Mammary epithelial cell (primary cell): ENCODE measurements at regions of chr7 and their contacts with region 1.

Region 1: DNA sequence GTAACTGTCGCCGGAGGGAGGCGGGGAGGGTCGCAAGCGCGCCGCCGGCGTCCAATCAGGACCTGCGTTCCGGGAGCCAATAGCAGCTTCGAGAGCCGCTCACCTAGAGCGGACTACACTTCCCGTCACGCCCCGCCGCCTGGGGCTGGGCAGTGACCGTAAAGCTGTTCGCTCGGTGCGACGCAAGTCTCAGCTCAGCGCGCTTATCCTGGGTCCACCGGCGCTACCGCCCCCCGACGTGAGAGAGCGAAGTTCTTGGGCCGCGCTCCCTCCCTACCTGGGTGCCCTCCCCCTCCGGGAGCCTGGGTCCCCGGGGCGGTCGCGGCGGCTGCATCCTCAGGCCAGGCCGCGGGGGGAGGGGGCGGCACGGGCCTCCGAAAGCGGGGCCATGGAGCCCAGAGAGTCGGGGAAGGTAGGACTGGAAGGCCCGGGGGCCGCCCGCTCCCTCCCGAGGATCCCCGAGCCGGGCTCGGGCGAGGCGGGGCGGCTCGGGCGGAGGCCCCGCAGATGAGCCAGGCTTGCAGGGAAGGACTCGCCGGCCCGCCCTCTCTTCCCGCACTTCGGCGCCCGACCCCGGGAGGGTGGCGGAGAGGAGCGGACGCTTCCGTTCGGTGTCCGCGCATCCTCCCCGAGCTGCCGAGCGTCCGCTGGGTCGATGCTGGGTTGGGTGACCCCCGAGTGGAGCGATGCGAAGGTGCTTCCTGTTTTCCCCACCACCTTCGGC is at the start of gene ZNF862:
- DNase-seq: peak; percentile 96
- H3K4me3 ChIP-seq: peak within 1 kb of the TSS; percentile 47 to 90 (median 81)
- H3K27ac ChIP-seq: peak within 1 kb of the TSS; percentile 25
- H3K4me1 ChIP-seq: peaks cover 10% of the 10 kb centered on the region
- H3K27me3 ChIP-seq: no peaks in the 10 kb centered on the region
- CTCF ChIP-seq: no peak
- total RNA-seq, gene ZNF862: 9.7 to 10.5 TPM

Region 2: DNA sequence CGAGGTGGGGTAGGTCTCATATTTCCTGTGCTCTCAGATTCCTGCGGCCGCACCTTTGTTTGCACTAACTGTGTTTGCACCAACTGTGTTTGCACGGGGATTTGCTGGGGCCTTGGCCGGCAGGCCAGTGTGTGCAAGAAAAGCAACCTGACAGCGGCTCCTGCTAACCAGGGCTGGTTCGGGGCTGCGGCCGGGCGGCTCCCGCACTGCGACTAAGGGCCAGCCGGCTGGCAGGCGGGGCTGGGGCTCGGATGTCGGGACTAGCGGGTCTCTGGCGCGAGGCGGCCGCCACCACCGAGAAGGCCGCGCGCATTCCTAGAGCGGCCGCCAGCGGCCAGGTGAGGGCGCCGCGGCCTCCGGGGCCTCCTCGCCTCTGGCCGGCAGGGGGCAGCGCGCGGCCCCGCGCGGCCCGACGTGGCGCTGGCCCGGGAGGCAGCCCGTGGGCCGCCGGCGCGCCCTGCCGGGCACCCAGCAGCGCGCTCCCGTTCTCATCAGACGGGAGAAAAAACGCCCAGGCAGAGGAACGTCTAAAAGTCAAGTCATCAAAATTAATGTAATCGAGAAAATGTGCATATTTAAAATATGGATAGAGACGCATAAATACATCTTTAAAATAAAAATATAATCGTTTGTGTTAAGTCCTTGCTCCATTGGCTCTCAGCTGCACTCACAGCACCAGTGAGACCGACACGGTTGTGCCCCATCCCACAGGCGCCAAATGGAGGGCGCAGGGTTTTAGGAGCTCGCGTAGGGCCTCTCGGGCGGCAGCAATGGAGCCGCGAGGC is 416.1 kb before region 1 on chr7:
- CTCF ChIA-PET with region 1: no interaction called
- dilution Hi-C with region 1: no loop called
- in situ Hi-C with region 1: no loop called
- intact Hi-C with region 1: no loop called
- DNase-seq: peak; percentile 64
- H3K4me3 ChIP-seq: peak overlapping the region; percentile 47 to 56 (median 50)
- H3K27ac ChIP-seq: no peak overlapping the region
- H3K4me1 ChIP-seq: peaks cover 4% of the 10 kb centered on the region
- H3K27me3 ChIP-seq: no peaks in the 10 kb centered on the region
- CTCF ChIP-seq: peak; percentile 49 to 66

Region 3: DNA sequence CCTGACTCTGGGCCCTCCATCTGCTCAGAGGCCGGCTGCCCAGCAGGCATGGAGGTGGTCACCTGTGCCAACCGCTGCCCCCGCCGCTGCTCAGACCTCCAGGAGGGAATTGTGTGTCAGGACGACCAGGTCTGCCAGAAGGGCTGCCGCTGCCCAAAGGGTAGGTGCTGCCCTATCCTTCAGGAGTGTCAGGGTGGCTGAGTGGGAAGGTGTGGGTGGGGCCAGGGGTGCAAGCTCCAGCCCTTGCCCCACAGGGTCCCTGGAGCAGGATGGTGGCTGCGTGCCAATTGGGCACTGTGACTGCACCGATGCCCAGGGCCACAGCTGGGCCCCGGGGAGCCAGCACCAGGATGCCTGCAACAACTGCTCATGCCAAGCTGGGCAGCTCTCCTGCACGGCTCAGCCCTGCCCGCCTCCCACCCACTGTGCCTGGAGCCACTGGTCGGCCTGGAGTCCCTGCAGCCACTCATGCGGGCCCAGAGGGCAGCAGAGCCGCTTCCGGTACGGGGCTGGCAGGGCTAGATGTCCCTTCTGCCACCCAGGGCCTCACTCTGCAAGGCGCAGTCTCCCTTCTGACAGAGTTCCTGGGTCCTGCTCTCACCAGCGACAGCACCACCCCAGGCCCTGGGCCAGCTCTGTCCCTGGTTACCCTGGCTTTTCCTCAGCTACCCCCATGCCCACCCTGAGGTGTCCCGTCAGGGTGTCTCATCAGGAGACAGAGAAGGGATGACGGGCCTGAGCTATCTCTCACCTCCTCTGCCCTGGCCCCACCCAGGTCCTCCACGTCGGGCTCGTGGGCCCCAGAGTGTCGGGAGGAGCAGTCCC is 17.6 kb before region 1 on chr7:
- CTCF ChIA-PET with region 1: interaction called, 10 read pairs
- dilution Hi-C with region 1: no loop called
- in situ Hi-C with region 1: no loop called
- intact Hi-C with region 1: no loop called
- DNase-seq: no peak
- H3K4me3 ChIP-seq: no peak overlapping the region
- H3K27ac ChIP-seq: no peak overlapping the region
- H3K4me1 ChIP-seq: no peaks in the 10 kb centered on the region
- H3K27me3 ChIP-seq: no peaks in the 10 kb centered on the region
- CTCF ChIP-seq: no peak

Region 4: DNA sequence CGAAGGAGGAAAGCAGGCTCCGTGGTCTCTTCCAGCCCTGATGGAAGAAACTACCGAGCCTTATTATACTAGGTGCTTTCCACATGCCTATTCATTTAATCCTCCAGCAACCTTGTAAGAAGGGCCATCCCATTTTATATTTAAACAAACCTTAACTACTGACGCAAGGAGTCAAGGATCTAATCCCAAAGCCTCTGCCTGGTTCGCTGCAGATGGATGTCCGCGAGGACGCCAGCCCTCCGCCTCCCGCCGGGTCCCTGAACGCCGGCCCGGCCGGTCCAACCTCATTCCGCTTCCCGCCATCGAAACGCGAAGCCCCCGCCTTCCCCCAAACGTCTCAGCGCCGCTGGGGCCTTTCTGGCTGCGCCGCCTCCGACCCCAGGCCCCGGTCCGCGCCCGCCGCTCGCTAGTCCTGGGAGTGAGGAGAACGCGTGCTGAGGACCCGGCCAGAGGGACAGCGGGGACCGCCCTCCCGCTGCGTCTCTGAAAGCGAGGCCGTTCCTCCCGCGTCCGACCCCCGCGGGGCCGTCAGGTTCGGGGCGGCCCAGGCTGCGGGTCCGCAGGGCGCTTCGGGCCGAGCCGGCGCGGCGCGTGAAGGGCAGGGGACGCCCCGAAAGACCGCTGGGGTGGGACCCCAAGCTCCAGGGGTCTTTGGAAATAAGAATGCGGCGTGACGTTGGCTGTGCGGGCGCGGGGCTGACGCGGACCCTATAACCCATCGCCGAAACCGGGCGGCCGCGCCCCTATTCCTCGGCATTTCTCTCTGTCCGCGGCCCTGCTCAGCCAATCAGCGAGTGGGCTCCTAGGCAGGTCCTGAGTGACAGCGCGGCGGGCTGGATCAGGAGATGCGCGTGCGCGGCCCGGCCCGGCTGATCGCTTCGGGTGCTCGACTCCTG is 34.9 kb after region 1 on chr7 and contains the start of gene ATP6V0E2:
- CTCF ChIA-PET with region 1: no interaction called
- dilution Hi-C with region 1: no loop called
- in situ Hi-C with region 1: no loop called
- intact Hi-C with region 1: loop called (anchors 2 kb)
- DNase-seq: peak; percentile 89
- H3K4me3 ChIP-seq: peak within 1 kb of the TSS; percentile 75 to 87 (median 77)
- H3K27ac ChIP-seq: peak within 1 kb of the TSS; percentile 59
- H3K4me1 ChIP-seq: peaks cover 17% of the 10 kb centered on the region
- H3K27me3 ChIP-seq: no peaks in the 10 kb centered on the region
- CTCF ChIP-seq: no peak
- total RNA-seq, gene ATP6V0E2: 4.4 to 12.5 TPM